Activated CD4-positive, alpha-beta memory T cell treated with anti-CD3 and anti-CD28 coated beads for 36 hours (primary cell): ENCODE measurements at regions of chr1 and their contacts with region 1.

Region 1: GRCh38 chr1:153967082-153968000 is at the start of gene CREB3L4:
- DNase-seq: peak; percentile 92
- H3K4me3 Mint-ChIP-seq: peak within 1 kb of the TSS; percentile 87
- H3K27ac Mint-ChIP-seq: peak within 1 kb of the TSS; percentile 90
- H3K4me1 Mint-ChIP-seq: peaks cover 41% of the 10 kb centered on the region
- H3K27me3 Mint-ChIP-seq: no peaks in the 10 kb centered on the region
- total RNA-seq, gene CREB3L4: 8.5 to 8.7 TPM

Region 2: GRCh38 chr1:153545067-153546055 is 422.0 kb before region 1 on chr1 and contains the start of gene S100A4:
- CTCF ChIA-PET with region 1: no interaction called
- POLR2A ChIA-PET with region 1: interaction called, 4 read pairs
- intact Hi-C with region 1: loop called (anchors 10 kb)
- DNase-seq: peak; percentile 98
- H3K4me3 Mint-ChIP-seq: peak within 1 kb of the TSS; percentile 92
- H3K27ac Mint-ChIP-seq: peak within 1 kb of the TSS; percentile 99
- H3K4me1 Mint-ChIP-seq: peaks cover 74% of the 10 kb centered on the region
- H3K27me3 Mint-ChIP-seq: no peaks in the 10 kb centered on the region
- total RNA-seq, gene S100A4: 352 to 382 TPM

Region 3: GRCh38 chr1:153805042-153805745 is 162.1 kb before region 1 on chr1:
- CTCF ChIA-PET with region 1: no interaction called
- POLR2A ChIA-PET with region 1: interaction called, 3 read pairs
- intact Hi-C with region 1: loop called (anchors 1 kb)
- DNase-seq: peak; percentile 87
- H3K4me3 Mint-ChIP-seq: peak overlapping the region; percentile 5
- H3K27ac Mint-ChIP-seq: peak overlapping the region; percentile 81
- H3K4me1 Mint-ChIP-seq: peaks cover 30% of the 10 kb centered on the region
- H3K27me3 Mint-ChIP-seq: no peaks in the 10 kb centered on the region

Region 4: GRCh38 chr1:153842006-153842471 is 125.3 kb before region 1 on chr1:
- CTCF ChIA-PET with region 1: no interaction called
- POLR2A ChIA-PET with region 1: no interaction called
- intact Hi-C with region 1: no loop called
- DNase-seq: no peak
- H3K4me3 Mint-ChIP-seq: no peak overlapping the region
- H3K27ac Mint-ChIP-seq: peak overlapping the region; percentile 15
- H3K4me1 Mint-ChIP-seq: peaks cover 31% of the 10 kb centered on the region
- H3K27me3 Mint-ChIP-seq: no peaks in the 10 kb centered on the region

Region 5: DNA sequence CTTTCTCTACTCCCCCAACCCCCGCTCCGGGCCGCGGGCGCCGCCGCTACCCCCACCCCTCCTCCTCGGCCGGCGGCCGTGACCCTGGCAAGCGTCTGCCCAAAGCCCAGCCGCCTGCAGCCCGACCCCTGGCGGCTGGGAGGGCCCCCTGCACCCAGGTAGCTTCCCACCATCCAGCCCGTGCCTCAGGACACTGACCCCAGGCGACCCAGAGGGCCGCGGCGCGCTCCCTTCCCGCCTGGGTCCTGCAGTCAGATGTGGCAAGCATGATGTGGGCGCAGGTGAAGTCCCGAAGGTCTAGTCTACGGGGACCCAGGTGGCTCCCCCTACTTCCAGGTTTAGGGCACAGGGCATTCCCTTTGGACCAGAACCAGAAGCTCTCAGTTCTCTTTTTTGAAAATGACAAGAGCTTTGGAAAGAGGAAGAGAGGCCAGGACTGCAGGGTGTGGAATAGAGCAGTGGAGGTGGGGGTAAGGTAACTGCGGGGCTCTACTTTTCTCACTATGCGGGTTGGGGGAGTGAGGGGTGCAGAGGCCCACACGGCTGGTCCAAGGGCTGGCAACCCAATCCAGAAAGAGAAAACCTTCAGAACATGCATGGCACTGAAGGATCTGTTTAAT is 20.6 kb before region 1 on chr1 and contains the start of gene DENND4B:
- CTCF ChIA-PET with region 1: interaction called, 29 read pairs
- POLR2A ChIA-PET with region 1: interaction called, 22 read pairs
- intact Hi-C with region 1: no loop called
- DNase-seq: peak; percentile 83
- H3K4me3 Mint-ChIP-seq: peak within 1 kb of the TSS; percentile 92
- H3K27ac Mint-ChIP-seq: peak within 1 kb of the TSS; percentile 97
- H3K4me1 Mint-ChIP-seq: peaks cover 25% of the 10 kb centered on the region
- H3K27me3 Mint-ChIP-seq: no peaks in the 10 kb centered on the region
- total RNA-seq, gene DENND4B: 98.1 to 108 TPM

Region 6: DNA sequence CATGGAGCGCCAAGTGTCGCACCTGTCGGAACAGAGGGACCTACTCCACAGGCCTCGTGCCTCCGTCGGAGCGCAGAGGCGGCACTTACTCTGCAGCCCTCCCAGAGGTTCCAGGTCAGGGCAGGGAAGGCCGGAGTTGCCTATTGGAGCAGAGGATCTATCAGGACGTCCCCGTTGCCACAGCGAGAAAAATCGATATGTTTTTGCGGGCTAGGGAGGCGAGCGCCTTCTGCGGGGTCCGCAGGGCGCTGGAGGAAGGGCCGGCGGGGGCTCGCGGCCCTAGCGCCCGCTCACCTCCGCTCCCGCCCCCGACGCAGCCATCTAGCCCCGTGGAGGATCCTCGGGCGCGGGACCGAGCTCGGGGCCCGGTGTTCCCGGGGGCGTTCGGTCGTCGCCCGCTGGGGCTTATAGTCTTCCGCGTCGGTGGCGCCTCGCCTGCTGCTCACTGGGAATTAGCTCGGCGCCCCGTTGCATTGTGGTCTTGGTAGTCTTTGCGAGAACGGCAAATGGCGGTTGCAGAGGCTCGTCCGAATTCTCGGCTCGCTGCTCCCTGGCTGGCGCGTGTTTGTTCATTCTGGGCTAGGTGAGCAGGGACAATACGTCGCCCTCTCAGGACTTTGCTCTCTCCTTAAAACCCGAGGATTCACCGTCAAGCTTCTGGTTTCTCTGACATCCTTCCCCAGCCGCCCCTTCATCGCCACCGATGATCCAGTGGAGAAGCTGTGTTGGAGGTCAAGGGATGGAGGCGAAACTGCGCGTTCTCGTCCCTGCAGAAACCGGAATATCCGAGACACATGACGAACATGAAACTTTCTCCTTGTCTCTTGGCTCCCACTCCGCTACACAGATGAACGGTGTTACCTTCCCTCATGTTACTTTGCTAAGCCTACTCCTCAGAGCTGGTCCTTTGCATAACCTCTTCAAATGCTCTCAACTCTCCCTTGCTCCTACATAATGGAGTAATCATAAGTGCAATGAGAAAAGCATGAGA is 10.2 kb after region 1 on chr1 and contains the start of gene JTB:
- CTCF ChIA-PET with region 1: interaction called, 44 read pairs
- POLR2A ChIA-PET with region 1: interaction called, 79 read pairs
- intact Hi-C with region 1: loop called (anchors 1 kb)
- DNase-seq: peak; percentile 92
- H3K4me3 Mint-ChIP-seq: peak within 1 kb of the TSS; percentile 90
- H3K27ac Mint-ChIP-seq: peak within 1 kb of the TSS; percentile 97
- H3K4me1 Mint-ChIP-seq: peaks cover 31% of the 10 kb centered on the region
- H3K27me3 Mint-ChIP-seq: no peaks in the 10 kb centered on the region
- total RNA-seq, gene JTB: 134 to 136 TPM

Region 7: GRCh38 chr1:154431586-154432373 is 464.4 kb after region 1 on chr1:
- CTCF ChIA-PET with region 1: no interaction called
- POLR2A ChIA-PET with region 1: no interaction called
- intact Hi-C with region 1: loop called (anchors 10 kb)
- DNase-seq: peak; percentile 86
- H3K4me3 Mint-ChIP-seq: no peak overlapping the region
- H3K27ac Mint-ChIP-seq: peak overlapping the region; percentile 85
- H3K4me1 Mint-ChIP-seq: peaks cover 56% of the 10 kb centered on the region
- H3K27me3 Mint-ChIP-seq: no peaks in the 10 kb centered on the region